Prostate gland (tissue), 2 donors: ENCODE measurements at regions of chr13 and their contacts with region 1.

Region 1: DNA sequence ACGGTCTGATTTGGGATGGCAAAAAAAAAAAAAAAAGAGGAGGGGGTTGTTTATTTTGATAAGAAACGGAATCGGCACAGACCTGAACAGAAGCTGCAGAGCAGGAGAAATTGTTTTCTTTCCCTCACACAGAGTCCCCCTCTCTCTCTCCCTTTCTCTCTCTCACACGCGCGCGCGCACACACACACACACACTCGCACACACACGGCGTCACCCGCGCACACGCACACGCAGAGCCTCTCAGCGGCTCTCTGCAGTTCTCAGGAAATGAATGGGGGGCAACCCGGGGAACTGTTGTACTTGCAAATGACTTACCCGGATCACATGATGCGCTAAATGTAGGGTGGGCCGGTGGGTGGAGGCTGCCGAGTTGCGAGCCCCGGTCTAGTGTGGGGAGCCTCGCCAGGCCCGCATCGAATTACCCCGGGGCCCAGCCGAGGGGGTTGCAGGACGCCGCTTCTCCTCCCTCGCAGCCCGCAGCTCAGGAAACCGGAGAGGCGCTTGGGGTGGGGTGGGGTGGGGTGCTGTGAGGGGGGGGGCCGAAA is 475 bp downstream of the KLF12 start:
- DNase-seq: peak; percentile 56
- H3K4me3 ChIP-seq: peak overlapping the region; percentile 77 to 88
- H3K27ac ChIP-seq: peak overlapping the region; percentile 85 to 86
- H3K4me1 ChIP-seq: no peaks in the 10 kb centered on the region
- H3K27me3 ChIP-seq: no peaks in the 10 kb centered on the region
- CTCF ChIP-seq: no peak
- POLR2A ChIP-seq: no peak

Region 2: GRCh38 chr13:73765651-73766384 is 367.9 kb before region 1 on chr13:
- intact Hi-C with region 1: loop called (anchors 5 kb)
- DNase-seq: peak; percentile 23
- H3K4me3 ChIP-seq: no peak overlapping the region
- H3K27ac ChIP-seq: peak overlapping the region; percentile 6 to 36
- H3K4me1 ChIP-seq: no peaks in the 10 kb centered on the region
- H3K27me3 ChIP-seq: no peaks in the 10 kb centered on the region
- CTCF ChIP-seq: no peak
- POLR2A ChIP-seq: no peak

Region 3: DNA sequence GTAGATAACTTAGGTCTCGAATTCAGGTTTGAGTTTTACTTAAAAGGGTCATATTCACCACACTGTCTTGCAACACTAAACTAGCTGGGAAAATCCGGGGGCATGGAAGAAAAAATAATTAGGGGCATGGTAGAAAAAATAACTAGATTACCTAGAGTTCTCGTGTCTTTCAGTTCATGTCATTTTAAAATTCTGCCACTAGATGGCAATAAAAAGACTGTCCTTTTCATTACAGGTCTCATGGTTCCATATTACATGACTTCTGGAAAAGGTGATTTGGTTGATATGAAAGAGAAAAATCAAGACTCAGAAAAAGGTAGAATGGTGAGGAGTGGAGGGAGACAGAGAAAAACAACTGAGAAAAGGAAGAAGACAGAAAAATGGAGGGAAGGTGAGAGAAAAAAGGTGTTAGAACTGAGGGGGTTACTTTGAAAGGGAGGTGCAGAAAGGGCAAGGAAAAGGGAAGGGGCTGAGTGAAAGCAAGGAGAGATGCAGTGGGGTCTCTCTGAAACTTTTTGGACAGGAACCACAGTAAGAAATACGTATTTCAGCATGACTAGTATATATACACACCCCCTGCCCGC is 298.5 kb before region 1 on chr13:
- intact Hi-C with region 1: loop called (anchors 5 kb)
- DNase-seq: no peak
- H3K4me3 ChIP-seq: no peak overlapping the region
- H3K27ac ChIP-seq: no peak overlapping the region
- H3K4me1 ChIP-seq: no peaks in the 10 kb centered on the region
- H3K27me3 ChIP-seq: no peaks in the 10 kb centered on the region
- CTCF ChIP-seq: peak; percentile 26 to 73 (median 69)
- POLR2A ChIP-seq: no peak

Region 4: GRCh38 chr13:73943137-73943964 is 190.4 kb before region 1 on chr13:
- intact Hi-C with region 1: loop called (anchors 10 kb)
- DNase-seq: no peak
- H3K4me3 ChIP-seq: no peak overlapping the region
- H3K27ac ChIP-seq: no peak overlapping the region
- H3K4me1 ChIP-seq: no peaks in the 10 kb centered on the region
- H3K27me3 ChIP-seq: no peaks in the 10 kb centered on the region
- CTCF ChIP-seq: no peak
- POLR2A ChIP-seq: no peak

Region 5: DNA sequence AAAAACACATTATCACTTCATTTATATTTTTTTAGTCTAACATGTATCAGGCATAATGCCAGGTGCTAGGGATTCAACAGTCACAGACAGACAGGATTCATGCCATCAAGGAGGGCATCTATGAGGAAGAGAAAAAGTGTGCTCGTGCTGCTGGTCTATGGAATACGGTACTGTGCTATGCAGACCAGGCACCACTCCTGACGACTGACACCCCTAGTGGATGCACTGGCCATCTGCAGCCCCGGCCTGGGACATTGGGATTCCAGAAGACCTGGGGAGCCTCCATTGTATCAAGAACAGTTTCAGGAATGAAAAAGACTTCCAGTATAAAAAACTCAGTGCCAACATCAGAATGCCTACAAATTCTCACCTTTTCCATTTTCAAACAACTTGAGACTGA is 93.5 kb before region 1 on chr13:
- intact Hi-C with region 1: no loop called
- DNase-seq: no peak
- H3K4me3 ChIP-seq: no peak overlapping the region
- H3K27ac ChIP-seq: no peak overlapping the region
- H3K4me1 ChIP-seq: no peaks in the 10 kb centered on the region
- H3K27me3 ChIP-seq: no peaks in the 10 kb centered on the region
- CTCF ChIP-seq: no peak
- POLR2A ChIP-seq: no peak

Region 6: GRCh38 chr13:74062933-74063332 is 70.8 kb before region 1 on chr13:
- intact Hi-C with region 1: loop called (anchors 5 kb)
- DNase-seq: no peak
- H3K4me3 ChIP-seq: no peak overlapping the region
- H3K27ac ChIP-seq: peak overlapping the region; percentile 34 to 44
- H3K4me1 ChIP-seq: no peaks in the 10 kb centered on the region
- H3K27me3 ChIP-seq: no peaks in the 10 kb centered on the region
- CTCF ChIP-seq: no peak
- POLR2A ChIP-seq: no peak

Region 7: DNA sequence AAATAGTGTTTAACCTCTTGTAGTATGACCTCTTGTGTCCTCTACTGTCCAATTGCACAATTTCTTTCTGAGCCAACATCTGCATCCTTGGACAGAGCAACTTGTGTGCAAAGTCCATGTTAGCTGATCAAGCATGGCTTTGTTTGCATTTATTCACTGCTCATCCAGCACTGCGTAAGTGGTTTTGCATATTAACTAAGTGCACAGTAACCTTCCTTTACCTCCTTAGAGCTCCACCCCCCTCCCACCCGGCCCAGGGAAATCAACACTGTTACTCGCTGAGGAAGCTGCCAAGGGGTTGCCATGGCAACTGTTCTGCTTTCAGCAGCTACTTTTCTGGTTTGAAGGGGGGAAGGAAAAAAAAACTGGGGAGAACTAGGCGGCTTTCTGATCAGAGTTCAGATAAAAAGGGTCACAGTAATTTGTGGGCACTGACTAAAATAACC is 154.0 kb after region 1 on chr13:
- intact Hi-C with region 1: loop called (anchors 5 kb)
- DNase-seq: peak; percentile 25
- H3K4me3 ChIP-seq: no peak overlapping the region
- H3K27ac ChIP-seq: no peak overlapping the region
- H3K4me1 ChIP-seq: peaks cover 7% of the 10 kb centered on the region
- H3K27me3 ChIP-seq: no peaks in the 10 kb centered on the region
- CTCF ChIP-seq: no peak
- POLR2A ChIP-seq: no peak